ENCODE measurements at regions of chr3 and their contacts with region 1.

Region 1: GRCh38 chr3:30658328-30659052 is 52.1 kb downstream of the TGFBR2 start:
- DNase-seq: peak in 4 of 5 donors; percentile 24 to 85 (median 70)
- H3K4me3 ChIP-seq: peak overlapping the region; percentile 12
- H3K4me3 Mint-ChIP-seq: peak overlapping the region; percentile 62 to 78 (median 74)
- H3K27ac ChIP-seq: no peak overlapping the region
- H3K27ac Mint-ChIP-seq: peak overlapping the region; percentile 90 to 99 (median 96)
- H3K4me1 ChIP-seq: peaks cover 100% of the 10 kb centered on the region
- H3K4me1 Mint-ChIP-seq: peaks cover 92 to 99% (median 97%) of the 10 kb centered on the region in 3 donors
- H3K27me3 ChIP-seq: no peaks in the 10 kb centered on the region
- H3K27me3 Mint-ChIP-seq: no peaks in the 10 kb centered on the region

Region 2: DNA sequence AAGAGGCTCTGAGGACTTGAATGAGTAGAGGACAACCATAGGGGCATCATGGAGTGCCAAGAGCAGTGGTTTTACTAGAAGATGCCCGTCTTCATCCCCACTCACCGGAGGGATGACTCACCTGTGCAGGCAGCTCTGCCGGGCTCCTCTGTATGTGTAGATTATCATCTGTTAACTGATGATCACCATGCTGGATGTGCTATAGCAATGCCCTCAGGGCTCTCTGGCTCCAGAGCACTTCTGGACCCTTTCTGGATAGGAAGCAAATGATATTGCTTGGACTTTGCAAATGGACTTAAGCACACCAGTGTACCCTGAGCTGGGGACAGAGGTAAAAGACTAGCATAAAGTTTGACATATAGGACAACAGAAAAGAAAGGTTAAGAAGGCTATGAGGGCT is 62.3 kb before region 1 on chr3:
- CTCF ChIA-PET with region 1: no interaction called
- POLR2A ChIA-PET with region 1: no interaction called
- DNase-seq: no peak
- H3K4me3 ChIP-seq: no peak overlapping the region
- H3K4me3 Mint-ChIP-seq: no peak overlapping the region
- H3K27ac ChIP-seq: no peak overlapping the region
- H3K27ac Mint-ChIP-seq: no peak overlapping the region
- H3K4me1 ChIP-seq: peaks cover 22% of the 10 kb centered on the region
- H3K4me1 Mint-ChIP-seq: peaks cover 11 to 21% (median 14%) of the 10 kb centered on the region in 3 donors
- H3K27me3 ChIP-seq: no peaks in the 10 kb centered on the region
- H3K27me3 Mint-ChIP-seq: no peaks in the 10 kb centered on the region

Region 3: DNA sequence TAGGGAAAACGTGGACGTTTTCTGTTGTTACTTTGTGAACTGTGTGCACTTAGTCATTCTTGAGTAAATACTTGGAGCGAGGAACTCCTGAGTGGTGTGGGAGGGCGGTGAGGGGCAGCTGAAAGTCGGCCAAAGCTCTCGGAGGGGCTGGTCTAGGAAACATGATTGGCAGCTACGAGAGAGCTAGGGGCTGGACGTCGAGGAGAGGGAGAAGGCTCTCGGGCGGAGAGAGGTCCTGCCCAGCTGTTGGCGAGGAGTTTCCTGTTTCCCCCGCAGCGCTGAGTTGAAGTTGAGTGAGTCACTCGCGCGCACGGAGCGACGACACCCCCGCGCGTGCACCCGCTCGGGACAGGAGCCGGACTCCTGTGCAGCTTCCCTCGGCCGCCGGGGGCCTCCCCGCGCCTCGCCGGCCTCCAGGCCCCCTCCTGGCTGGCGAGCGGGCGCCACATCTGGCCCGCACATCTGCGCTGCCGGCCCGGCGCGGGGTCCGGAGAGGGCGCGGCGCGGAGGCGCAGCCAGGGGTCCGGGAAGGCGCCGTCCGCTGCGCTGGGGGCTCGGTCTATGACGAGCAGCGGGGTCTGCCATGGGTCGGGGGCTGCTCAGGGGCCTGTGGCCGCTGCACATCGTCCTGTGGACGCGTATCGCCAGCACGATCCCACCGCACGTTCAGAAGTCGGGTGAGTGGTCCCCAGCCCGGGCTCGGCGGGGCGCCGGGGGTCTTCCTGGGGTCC is 52.0 kb before region 1 on chr3 and contains the start of gene TGFBR2:
- CTCF ChIA-PET with region 1: interaction called, 16 read pairs
- POLR2A ChIA-PET with region 1: interaction called, 18 read pairs
- DNase-seq: peak; percentile 71 to 87 (median 76)
- H3K4me3 ChIP-seq: peak within 1 kb of the TSS; percentile 98
- H3K4me3 Mint-ChIP-seq: peak within 1 kb of the TSS; percentile 92 to 99 (median 98)
- H3K27ac ChIP-seq: peak within 1 kb of the TSS; percentile 78
- H3K27ac Mint-ChIP-seq: peak within 1 kb of the TSS; percentile 85 to 99 (median 98)
- H3K4me1 ChIP-seq: peaks cover 55% of the 10 kb centered on the region
- H3K4me1 Mint-ChIP-seq: peaks cover 59 to 66% (median 60%) of the 10 kb centered on the region in 3 donors
- H3K27me3 ChIP-seq: no peaks in the 10 kb centered on the region
- H3K27me3 Mint-ChIP-seq: no peaks in the 10 kb centered on the region
- total RNA-seq, gene TGFBR2: 55.3 to 56.3 TPM

Region 4: DNA sequence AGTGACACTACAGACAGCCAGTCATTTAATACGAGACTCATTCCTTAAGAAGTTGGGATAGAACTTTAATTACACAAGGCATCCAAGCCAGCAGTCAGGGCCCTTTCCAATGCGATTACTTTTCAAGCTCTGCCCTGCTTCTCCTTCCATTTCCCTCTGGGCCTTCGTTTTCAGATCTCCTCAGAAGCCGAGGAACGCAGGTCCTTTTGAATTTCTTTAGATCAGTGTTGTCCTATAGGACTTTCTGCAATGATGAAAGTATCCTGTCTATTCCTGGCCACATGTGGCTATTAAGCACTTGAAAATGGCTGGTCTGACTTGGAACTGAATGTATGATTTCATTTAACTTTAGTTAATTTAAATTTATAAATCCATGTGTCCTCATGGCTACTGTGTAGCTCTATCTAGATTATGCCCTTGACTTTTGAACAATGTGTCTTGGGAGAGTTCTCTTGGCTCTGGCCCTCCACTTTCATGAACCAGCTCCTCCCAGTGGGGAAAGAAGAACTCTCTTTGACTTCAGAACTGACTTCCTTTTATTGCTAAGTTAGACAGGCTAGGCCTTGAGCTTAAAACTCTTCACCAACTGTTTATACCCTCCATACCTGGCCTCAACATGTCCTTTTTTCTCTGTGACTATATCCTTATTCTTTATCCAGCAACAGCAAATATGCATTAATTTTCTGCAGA is 29.4 kb before region 1 on chr3:
- CTCF ChIA-PET with region 1: interaction called, 13 read pairs
- POLR2A ChIA-PET with region 1: interaction called, 13 read pairs
- DNase-seq: no peak
- H3K4me3 ChIP-seq: peak overlapping the region; percentile 22
- H3K4me3 Mint-ChIP-seq: peak overlapping the region; percentile 16 to 74 (median 61)
- H3K27ac ChIP-seq: no peak overlapping the region
- H3K27ac Mint-ChIP-seq: peak overlapping the region; percentile 78 to 99 (median 93)
- H3K4me1 ChIP-seq: peaks cover 97% of the 10 kb centered on the region
- H3K4me1 Mint-ChIP-seq: peaks cover 89 to 99% (median 98%) of the 10 kb centered on the region in 3 donors
- H3K27me3 ChIP-seq: no peaks in the 10 kb centered on the region
- H3K27me3 Mint-ChIP-seq: no peaks in the 10 kb centered on the region

Region 5: DNA sequence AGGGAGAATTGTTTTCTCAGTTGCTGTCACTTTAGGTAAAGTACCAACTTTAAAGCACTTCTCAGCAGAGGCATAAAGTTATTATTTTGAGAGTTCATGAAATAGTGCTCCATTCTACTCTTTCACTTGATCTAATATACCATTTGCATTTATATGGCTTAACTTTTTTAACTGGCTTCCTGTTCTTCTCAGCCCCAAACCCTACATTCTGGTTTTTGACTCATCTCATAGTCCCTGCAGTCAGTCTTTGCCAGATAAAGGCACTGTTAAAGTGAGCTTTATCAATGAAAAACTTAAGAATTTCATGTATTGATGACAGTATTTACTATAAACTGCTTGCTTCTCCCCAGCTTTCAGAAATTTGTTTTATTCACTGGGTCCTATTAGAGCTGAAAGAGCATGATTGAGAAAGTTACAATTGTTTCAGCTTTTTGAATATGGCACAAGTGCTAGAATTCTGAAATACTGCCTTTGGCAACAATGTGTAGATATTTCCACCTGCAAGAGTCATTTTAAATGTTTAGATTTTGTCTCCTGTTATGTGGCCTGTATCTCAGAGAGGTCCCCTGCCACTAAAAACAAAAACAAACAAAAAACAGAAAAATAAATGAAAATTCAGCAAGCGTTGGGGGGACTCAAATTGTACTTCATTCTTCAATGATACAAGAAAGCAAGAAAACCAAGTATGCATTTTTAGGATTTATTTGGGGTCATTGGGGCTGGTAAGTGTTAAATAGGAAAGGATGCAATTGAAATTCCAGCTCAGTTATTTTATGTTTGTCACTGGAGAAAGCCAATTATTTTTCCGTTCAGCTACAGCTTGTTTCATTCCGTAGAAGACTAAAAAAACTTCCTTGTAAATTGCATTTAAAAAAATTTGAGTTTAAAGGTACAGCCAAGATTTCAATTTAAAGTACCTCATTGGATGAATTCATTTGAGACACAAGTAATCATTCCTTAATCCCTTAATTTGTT is 23.4 kb before region 1 on chr3:
- CTCF ChIA-PET with region 1: interaction called, 13 read pairs
- POLR2A ChIA-PET with region 1: interaction called, 13 read pairs
- DNase-seq: no peak
- H3K4me3 ChIP-seq: peak overlapping the region; percentile 2
- H3K4me3 Mint-ChIP-seq: peak overlapping the region in 6 of 7 donors; percentile 52 to 87 (median 71)
- H3K27ac ChIP-seq: no peak overlapping the region
- H3K27ac Mint-ChIP-seq: peak overlapping the region; percentile 89 to 95 (median 91)
- H3K4me1 ChIP-seq: peaks cover 98% of the 10 kb centered on the region
- H3K4me1 Mint-ChIP-seq: peaks cover 96 to 100% (median 98%) of the 10 kb centered on the region in 3 donors
- H3K27me3 ChIP-seq: no peaks in the 10 kb centered on the region
- H3K27me3 Mint-ChIP-seq: no peaks in the 10 kb centered on the region

Region 6: DNA sequence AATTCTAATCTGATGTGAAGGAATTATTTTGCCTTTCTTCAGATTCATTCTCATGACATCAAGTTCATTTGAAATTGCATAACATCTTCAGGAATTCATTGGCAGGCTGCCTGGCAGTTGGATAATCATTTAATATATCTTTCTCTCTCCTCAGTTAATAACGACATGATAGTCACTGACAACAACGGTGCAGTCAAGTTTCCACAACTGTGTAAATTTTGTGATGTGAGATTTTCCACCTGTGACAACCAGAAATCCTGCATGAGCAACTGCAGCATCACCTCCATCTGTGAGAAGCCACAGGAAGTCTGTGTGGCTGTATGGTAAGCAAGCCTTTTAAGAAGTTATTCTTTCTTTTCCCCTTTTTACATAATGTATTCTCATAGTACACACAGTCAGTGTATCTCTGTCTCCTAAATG is 13.9 kb before region 1 on chr3:
- CTCF ChIA-PET with region 1: interaction called, 9 read pairs
- POLR2A ChIA-PET with region 1: interaction called, 14 read pairs
- DNase-seq: peak; percentile 34 to 78 (median 68)
- H3K4me3 ChIP-seq: peak overlapping the region; percentile 9
- H3K4me3 Mint-ChIP-seq: peak overlapping the region; percentile 56 to 80 (median 66)
- H3K27ac ChIP-seq: peak overlapping the region; percentile 38
- H3K27ac Mint-ChIP-seq: peak overlapping the region; percentile 83 to 98 (median 90)
- H3K4me1 ChIP-seq: peaks cover 98% of the 10 kb centered on the region
- H3K4me1 Mint-ChIP-seq: peaks cover 89 to 100% (median 98%) of the 10 kb centered on the region in 3 donors
- H3K27me3 ChIP-seq: no peaks in the 10 kb centered on the region
- H3K27me3 Mint-ChIP-seq: no peaks in the 10 kb centered on the region

Region 7: GRCh38 chr3:30810625-30811024 is 152.1 kb after region 1 on chr3:
- CTCF ChIA-PET with region 1: no interaction called
- POLR2A ChIA-PET with region 1: no interaction called
- DNase-seq: no peak
- H3K4me3 ChIP-seq: no peak overlapping the region
- H3K4me3 Mint-ChIP-seq: no peak overlapping the region
- H3K27ac ChIP-seq: no peak overlapping the region
- H3K27ac Mint-ChIP-seq: no peak overlapping the region
- H3K4me1 ChIP-seq: no peaks in the 10 kb centered on the region
- H3K4me1 Mint-ChIP-seq: no peaks in the 10 kb centered on the region
- H3K27me3 ChIP-seq: no peaks in the 10 kb centered on the region
- H3K27me3 Mint-ChIP-seq: peaks cover 5 to 12% of the 10 kb centered on the region in 2 donors

Measured in CD8-positive, alpha-beta memory T cell (primary cell).